Sigmoid colon (tissue), 7 donors: ENCODE measurements at regions of chr16 and their contacts with region 1.

Region 1: DNA sequence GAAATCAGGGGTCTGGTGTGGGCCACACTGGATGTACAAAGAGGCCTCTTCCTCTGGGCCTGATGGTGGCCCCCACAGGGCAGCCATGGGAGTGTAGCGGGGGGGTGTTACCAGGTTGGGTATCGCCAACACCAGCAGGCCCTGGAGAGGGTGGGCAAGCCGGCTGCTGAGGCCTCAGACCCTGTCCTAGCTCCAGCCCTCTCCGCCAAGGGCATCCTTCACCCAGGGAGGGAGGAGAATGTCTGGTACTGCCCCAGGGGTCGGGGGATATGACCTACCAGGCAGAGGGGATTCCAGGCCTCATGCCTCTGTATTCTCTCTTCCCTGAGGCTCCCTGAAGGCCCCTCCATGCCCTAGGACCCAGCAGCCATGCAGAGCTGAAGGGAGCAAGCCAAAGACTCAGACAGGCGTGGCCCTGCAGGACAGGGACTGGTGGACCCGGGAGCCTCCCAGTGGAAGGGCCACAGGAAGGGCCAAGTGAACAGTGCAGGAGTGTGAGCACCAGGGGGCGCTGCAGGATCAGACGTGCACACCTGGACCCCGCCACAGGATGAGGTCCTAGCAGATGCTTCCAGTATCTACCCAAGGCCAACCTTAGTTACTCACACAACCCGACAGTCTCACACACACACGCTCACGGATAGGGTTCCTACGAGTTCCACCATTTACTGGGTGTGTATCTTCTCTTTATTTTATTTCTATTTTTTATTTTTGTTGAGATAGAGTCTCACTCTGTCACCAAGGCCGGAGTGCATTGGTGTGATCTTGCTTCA is 10.9 kb upstream of the CES4A start:
- DNase-seq: peak; percentile 94
- H3K4me3 ChIP-seq: no peak overlapping the region
- H3K27ac ChIP-seq: no peak overlapping the region
- H3K4me1 ChIP-seq: no peaks in the 10 kb centered on the region
- H3K27me3 ChIP-seq: peaks cover 0 to 7% (median 0%) of the 10 kb centered on the region in 3 donors
- CTCF ChIP-seq: peak; percentile 92 to 99 (median 96)
- EP300 ChIP-seq: no peak
- POLR2A ChIP-seq: no peak

Region 2: GRCh38 chr16:67183627-67184328 is 206.3 kb after region 1 on chr16 and contains the start of gene MATCAP1:
- intact Hi-C with region 1: loop called (anchors 1 kb)
- DNase-seq: peak; percentile 98
- H3K4me3 ChIP-seq: peak within 1 kb of the TSS; percentile 68 to 79 (median 73)
- H3K27ac ChIP-seq: peak within 1 kb of the TSS; percentile 91 to 96 (median 94)
- H3K4me1 ChIP-seq: peaks cover 0 to 39% (median 33%) of the 10 kb centered on the region in 4 donors
- H3K27me3 ChIP-seq: no peaks in the 10 kb centered on the region
- CTCF ChIP-seq: no peak
- EP300 ChIP-seq: peak in 2 of 4 donors; percentile 41 to 55
- POLR2A ChIP-seq: peak in 1 of 2 donors; percentile 41
- total RNA-seq, gene MATCAP1: 6.6 to 22.2 (median 9.7) TPM